CD4-positive, alpha-beta T cell (primary cell): ENCODE measurements at regions of chr3 and their contacts with region 1.

Region 1: GRCh38 chr3:15113463-15113862 is 14.5 kb upstream of the RBSN start:
- DNase-seq: no peak
- ATAC-seq: no peak
- H3K4me3 ChIP-seq: no peak overlapping the region
- H3K4me3 Mint-ChIP-seq: no peak overlapping the region
- H3K27ac ChIP-seq: no peak overlapping the region
- H3K27ac Mint-ChIP-seq: no peak overlapping the region
- H3K4me1 ChIP-seq: peaks cover under 1% of the 10 kb centered on the region
- H3K4me1 Mint-ChIP-seq: no peaks in the 10 kb centered on the region
- H3K27me3 ChIP-seq: no peaks in the 10 kb centered on the region
- H3K27me3 Mint-ChIP-seq: peaks cover 1% of the 10 kb centered on the region
- CTCF ChIP-seq: no peak

Region 2: DNA sequence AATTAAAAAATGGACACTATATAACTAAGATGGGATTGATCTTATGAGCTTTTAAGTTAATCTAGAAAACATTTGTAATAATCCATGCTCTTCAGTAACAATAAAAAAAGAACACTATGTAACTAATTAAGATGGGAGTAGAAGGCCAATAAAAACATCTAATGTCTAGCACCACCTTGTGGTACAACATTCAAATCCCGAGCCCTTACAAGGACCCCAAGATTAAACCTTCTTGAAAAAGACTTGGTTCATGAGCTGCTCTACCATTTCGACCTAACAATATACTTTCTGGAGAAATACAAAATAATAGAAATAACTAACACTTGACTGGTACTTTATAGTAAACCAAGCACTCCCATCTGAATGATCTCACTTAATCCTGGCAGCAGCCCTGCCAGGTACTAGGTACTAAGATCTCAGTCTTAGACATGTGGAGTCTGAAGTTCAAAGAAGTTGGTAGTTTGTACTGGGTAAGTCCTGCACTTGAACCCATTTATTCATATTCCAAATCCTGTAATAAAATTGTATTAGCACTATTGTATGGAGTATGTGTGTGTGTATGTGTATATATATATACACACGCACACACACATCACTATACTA is 292.1 kb after region 1 on chr3:
- CTCF ChIA-PET with region 1: interaction called, 7 read pairs
- POLR2A ChIA-PET with region 1: no interaction called
- intact Hi-C with region 1: loop called (anchors 5 kb)
- DNase-seq: peak in 4 of 14 experiments; percentile 39 to 77 (median 72)
- ATAC-seq: peak; percentile 82
- H3K4me3 ChIP-seq: no peak overlapping the region
- H3K4me3 Mint-ChIP-seq: no peak overlapping the region
- H3K27ac ChIP-seq: no peak overlapping the region
- H3K27ac Mint-ChIP-seq: no peak overlapping the region
- H3K4me1 ChIP-seq: peaks cover 7% of the 10 kb centered on the region
- H3K4me1 Mint-ChIP-seq: peaks cover 1% of the 10 kb centered on the region
- H3K27me3 ChIP-seq: no peaks in the 10 kb centered on the region
- H3K27me3 Mint-ChIP-seq: no peaks in the 10 kb centered on the region
- CTCF ChIP-seq: peak; percentile 63